WTC11 (cell line): ENCODE measurements at regions of chr12 and their contacts with region 1.

Region 1: DNA sequence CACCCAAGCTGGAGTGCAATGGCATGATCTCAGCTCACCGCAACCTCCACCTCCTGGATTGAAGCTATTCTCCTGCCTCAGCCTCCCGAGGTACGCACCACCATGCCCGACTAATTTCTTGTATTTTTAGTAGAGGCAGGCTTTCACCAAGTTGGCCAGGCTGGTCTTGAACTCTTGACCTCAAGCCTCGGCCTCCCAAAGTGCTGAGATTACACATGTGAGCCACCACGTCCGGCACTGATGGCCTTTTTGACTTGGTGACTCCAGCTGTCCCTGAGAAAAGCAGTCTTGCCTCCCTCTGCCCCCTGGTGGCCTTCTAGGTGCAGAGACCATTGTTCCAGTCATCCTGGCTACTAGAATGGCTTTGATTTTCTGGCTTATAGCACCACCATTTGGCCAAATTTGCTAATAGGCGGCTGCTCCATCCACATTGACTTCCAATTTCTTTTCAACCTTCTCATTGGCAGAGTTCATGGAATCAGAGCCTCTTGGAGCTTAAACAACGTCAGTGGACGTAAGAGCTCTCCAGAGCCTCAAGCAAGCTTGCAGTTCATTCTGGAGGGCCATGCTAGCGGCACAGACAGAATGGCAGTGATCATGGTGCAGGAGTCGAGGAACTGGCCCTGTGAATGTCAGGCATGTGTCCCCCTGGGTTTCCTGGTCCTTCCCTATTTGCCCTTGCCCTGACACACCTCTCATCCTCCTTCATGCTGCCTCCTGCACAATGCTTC is 25.4 kb upstream of the EIF4B start:
- DNase-seq: peak; percentile 92
- ATAC-seq: peak; percentile 86
- H3K4me3 Mint-ChIP-seq: no peak overlapping the region
- H3K27ac Mint-ChIP-seq: no peak overlapping the region
- H3K4me1 Mint-ChIP-seq: peaks cover 13% of the 10 kb centered on the region
- H3K27me3 Mint-ChIP-seq: no peaks in the 10 kb centered on the region; the same call in 1 of the 2 replicates
- CTCF ChIP-seq: peak; percentile 97

Region 2: GRCh38 chr12:52865090-52865944 is 115.5 kb before region 1 on chr12:
- CTCF ChIA-PET with region 1: interaction called, 26 read pairs
- POLR2A ChIA-PET with region 1: no interaction called
- DNase-seq: peak; percentile 91
- ATAC-seq: peak; percentile 86
- H3K4me3 Mint-ChIP-seq: no peak overlapping the region
- H3K27ac Mint-ChIP-seq: peak overlapping the region; percentile 19; the same call in 1 of the 2 replicates
- H3K4me1 Mint-ChIP-seq: peaks cover 6% of the 10 kb centered on the region; the same call in 1 of the 2 replicates
- H3K27me3 Mint-ChIP-seq: no peaks in the 10 kb centered on the region
- CTCF ChIP-seq: peak; percentile 78

Region 3: GRCh38 chr12:52895061-52895887 is 85.6 kb before region 1 on chr12:
- CTCF ChIA-PET with region 1: interaction called, 72 read pairs
- POLR2A ChIA-PET with region 1: no interaction called
- DNase-seq: no peak
- ATAC-seq: no peak
- H3K4me3 Mint-ChIP-seq: no peak overlapping the region
- H3K27ac Mint-ChIP-seq: no peak overlapping the region
- H3K4me1 Mint-ChIP-seq: no peaks in the 10 kb centered on the region
- H3K27me3 Mint-ChIP-seq: no peaks in the 10 kb centered on the region
- CTCF ChIP-seq: no peak

Region 4: DNA sequence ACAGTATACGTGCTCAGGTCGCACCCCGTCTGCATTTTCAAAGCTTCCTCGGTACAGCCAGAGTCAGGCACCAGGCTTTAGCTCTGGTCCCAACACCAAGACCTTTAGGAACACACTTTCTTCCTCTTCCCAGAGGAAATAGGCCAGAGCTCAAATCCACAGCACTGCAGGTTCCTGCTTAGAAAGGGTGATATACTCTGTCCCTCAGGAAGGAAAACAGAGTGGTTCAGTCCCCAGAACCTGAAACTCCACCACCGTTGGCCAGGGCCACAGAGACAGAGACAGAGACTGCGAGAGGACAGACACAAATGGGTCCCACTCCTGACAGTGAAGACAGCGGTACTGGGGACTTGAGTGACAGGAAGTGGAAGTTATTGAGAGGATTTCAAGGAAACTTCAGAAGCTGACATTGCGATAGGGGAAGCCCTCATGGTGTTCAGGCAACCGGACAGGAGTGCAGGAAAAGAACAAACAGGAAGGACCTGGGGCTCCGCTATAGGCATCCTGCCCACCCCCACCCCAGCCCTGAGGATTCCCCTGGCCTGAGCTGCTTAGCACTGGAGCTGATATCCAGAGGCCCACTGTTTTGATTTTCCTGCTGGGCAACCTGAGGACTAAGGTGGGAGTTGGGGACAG is 70.5 kb before region 1 on chr12:
- CTCF ChIA-PET with region 1: interaction called, 75 read pairs
- POLR2A ChIA-PET with region 1: interaction called, 7 read pairs
- DNase-seq: no peak
- ATAC-seq: no peak
- H3K4me3 Mint-ChIP-seq: no peak overlapping the region
- H3K27ac Mint-ChIP-seq: peak overlapping the region; percentile 2; the same call in 1 of the 2 replicates
- H3K4me1 Mint-ChIP-seq: peaks cover 59% of the 10 kb centered on the region
- H3K27me3 Mint-ChIP-seq: no peaks in the 10 kb centered on the region; the same call in 1 of the 2 replicates
- CTCF ChIP-seq: no peak

Region 5: GRCh38 chr12:52924764-52925716 is 55.8 kb before region 1 on chr12:
- CTCF ChIA-PET with region 1: interaction called, 37 read pairs
- POLR2A ChIA-PET with region 1: interaction called, 3 read pairs
- DNase-seq: no peak
- ATAC-seq: no peak
- H3K4me3 Mint-ChIP-seq: no peak overlapping the region
- H3K27ac Mint-ChIP-seq: no peak overlapping the region; the same call in 1 of the 2 replicates
- H3K4me1 Mint-ChIP-seq: peaks cover 55% of the 10 kb centered on the region
- H3K27me3 Mint-ChIP-seq: no peaks in the 10 kb centered on the region
- CTCF ChIP-seq: no peak

Region 6: DNA sequence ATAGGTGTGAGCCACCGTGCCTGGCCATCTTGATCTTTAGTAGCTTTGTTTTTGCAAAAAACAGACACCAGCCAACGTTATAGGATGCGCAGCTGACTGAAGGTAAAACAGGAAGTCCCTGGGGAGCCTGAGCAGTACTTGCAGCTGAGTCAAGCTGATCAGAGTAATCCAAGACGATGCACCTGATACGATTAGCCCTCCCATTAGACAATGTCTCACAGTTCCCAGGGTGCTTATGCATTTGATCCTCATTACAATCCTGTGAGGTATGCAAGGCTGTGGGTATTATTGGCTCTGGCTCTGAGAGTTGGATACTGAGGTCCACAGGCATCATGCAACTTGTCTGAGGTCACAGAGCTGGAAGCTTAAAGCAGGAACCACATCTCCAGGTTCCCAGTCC is 23.9 kb before region 1 on chr12:
- CTCF ChIA-PET with region 1: interaction called, 26 read pairs
- POLR2A ChIA-PET with region 1: no interaction called
- DNase-seq: no peak
- ATAC-seq: peak; percentile 36
- H3K4me3 Mint-ChIP-seq: no peak overlapping the region
- H3K27ac Mint-ChIP-seq: peak overlapping the region; percentile 55
- H3K4me1 Mint-ChIP-seq: peaks cover 15% of the 10 kb centered on the region
- H3K27me3 Mint-ChIP-seq: no peaks in the 10 kb centered on the region; the same call in 1 of the 2 replicates
- CTCF ChIP-seq: no peak

Region 7: GRCh38 chr12:52992699-52993557 is 12.1 kb after region 1 on chr12:
- CTCF ChIA-PET with region 1: interaction called, 30 read pairs
- POLR2A ChIA-PET with region 1: interaction called, 6 read pairs
- DNase-seq: no peak
- ATAC-seq: no peak
- H3K4me3 Mint-ChIP-seq: no peak overlapping the region
- H3K27ac Mint-ChIP-seq: no peak overlapping the region
- H3K4me1 Mint-ChIP-seq: peaks cover 8% of the 10 kb centered on the region; the same call in 1 of the 2 replicates
- H3K27me3 Mint-ChIP-seq: peaks cover 7% of the 10 kb centered on the region
- CTCF ChIP-seq: no peak

Region 8: DNA sequence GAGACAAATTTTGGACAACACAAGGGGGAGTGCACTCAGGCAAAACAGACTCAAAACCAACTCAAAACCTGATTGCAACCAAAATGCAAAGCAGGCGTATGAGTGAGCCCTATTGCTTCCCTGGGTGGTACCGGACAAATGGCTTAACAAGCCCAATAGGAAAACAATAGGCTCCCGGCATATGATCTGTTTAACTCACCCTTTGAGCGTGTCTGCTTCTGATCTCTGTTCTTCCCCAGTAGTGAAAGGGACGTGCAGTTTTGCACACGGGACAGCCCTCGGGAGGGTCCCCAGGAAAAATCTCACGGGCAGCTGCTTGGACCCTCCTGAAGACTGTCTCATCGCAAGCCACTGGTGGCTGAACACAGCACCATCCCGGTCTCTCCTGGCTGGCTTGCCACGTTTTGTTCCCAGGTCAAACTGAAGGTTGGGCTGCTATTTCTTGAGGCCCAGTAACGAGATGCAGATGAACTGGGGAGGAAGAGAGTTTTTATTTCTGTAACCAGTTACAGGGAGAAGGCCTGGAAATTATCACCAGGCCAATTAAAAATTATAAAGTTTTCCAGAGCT is 132.4 kb after region 1 on chr12:
- CTCF ChIA-PET with region 1: no interaction called
- POLR2A ChIA-PET with region 1: no interaction called
- DNase-seq: no peak
- ATAC-seq: no peak
- H3K4me3 Mint-ChIP-seq: no peak overlapping the region
- H3K27ac Mint-ChIP-seq: no peak overlapping the region
- H3K4me1 Mint-ChIP-seq: 0 out of 2 replicates have a peak, but pooled peaks cover 2% of the 10 kb centered on the region
- H3K27me3 Mint-ChIP-seq: peaks cover 19% of the 10 kb centered on the region
- CTCF ChIP-seq: no peak